B cell (primary cell): ENCODE measurements at regions of chr1 and their contacts with region 1.

Region 1: DNA sequence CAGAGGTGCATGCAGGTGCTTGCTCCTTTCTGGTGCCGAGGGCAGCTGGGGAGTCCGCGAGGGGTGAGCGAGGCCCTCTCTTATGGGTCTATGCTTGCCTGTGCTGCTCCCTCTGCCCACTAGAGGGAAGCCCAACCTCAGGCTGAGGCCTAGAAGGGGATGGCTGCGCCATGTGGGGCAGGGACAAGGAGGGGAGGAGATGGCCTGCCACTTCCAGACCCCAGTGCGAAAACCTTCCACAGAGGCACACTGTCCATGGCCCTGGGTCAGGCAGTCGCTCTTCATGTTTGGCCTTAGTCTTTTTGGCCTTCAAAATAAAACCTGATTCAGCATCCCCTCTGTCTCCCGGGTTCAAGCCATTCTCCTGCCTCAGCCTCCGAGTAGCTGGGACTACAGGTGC is 14.0 kb downstream of the RHBG start:
- DNase-seq: peak; percentile 70
- ATAC-seq: peak; percentile 87
- H3K4me3 ChIP-seq: no peak overlapping the region
- H3K4me3 Mint-ChIP-seq: no peak overlapping the region
- H3K27ac ChIP-seq: no peak overlapping the region
- H3K27ac Mint-ChIP-seq: no peak overlapping the region
- H3K4me1 ChIP-seq: peaks cover 0 to 11% of the 10 kb centered on the region in 2 donors
- H3K4me1 Mint-ChIP-seq: peaks cover 4% of the 10 kb centered on the region
- H3K27me3 ChIP-seq: peaks cover 0 to 22% (median 9%) of the 10 kb centered on the region in 4 experiments
- H3K27me3 Mint-ChIP-seq: peaks cover 14% of the 10 kb centered on the region
- CTCF ChIP-seq: peak; percentile 78

Region 2: GRCh38 chr1:156212833-156213643 is 170.0 kb before region 1 on chr1 and contains the start of gene PMF1:
- CTCF ChIA-PET with region 1: no interaction called
- POLR2A ChIA-PET with region 1: no interaction called
- intact Hi-C with region 1: no loop called
- DNase-seq: peak; percentile 97
- ATAC-seq: peak; percentile 97
- H3K4me3 ChIP-seq: peak within 1 kb of the TSS; percentile 75 to 95 (median 81)
- H3K4me3 Mint-ChIP-seq: peak within 1 kb of the TSS; percentile 98
- H3K27ac ChIP-seq: peak within 1 kb of the TSS; percentile 93 to 94
- H3K27ac Mint-ChIP-seq: peak within 1 kb of the TSS; percentile 99
- H3K4me1 ChIP-seq: peaks cover 14 to 19% of the 10 kb centered on the region in 2 donors
- H3K4me1 Mint-ChIP-seq: peaks cover 29% of the 10 kb centered on the region
- H3K27me3 ChIP-seq: no peaks in the 10 kb centered on the region
- H3K27me3 Mint-ChIP-seq: no peaks in the 10 kb centered on the region
- CTCF ChIP-seq: no peak
- total RNA-seq, gene PMF1: 58.3 and 64.3 TPM in 2 replicates

Region 3: DNA sequence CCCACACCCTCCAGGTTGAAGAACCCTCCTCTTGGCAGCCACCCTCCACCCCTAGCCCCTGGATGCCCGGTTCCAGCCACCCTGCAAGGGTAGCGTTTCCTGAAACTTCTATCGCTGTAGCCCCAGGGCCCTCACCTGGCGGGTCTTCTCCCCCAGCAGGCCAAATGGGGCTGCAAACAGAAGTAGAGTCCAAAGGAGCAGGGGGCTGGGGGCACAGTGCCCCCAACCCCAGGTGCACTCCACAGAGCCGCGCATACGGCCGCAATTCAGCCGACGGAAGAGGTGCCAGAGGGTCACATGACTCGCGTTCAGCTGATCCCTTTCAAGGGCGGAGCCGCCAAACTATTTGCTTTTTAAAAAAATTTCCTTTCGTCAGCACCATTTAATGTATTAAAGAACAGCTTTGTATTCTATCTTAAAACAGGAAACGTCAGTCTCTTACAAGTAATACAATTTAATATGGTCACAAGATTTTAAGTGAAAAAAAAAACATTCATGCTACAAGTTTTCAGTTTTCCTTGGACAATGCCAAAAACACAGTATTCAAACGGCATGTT is 87.6 kb before region 1 on chr1 and contains the start of gene GLMP:
- CTCF ChIA-PET with region 1: no interaction called
- POLR2A ChIA-PET with region 1: no interaction called
- intact Hi-C with region 1: no loop called
- DNase-seq: peak; percentile 70
- ATAC-seq: peak; percentile 60
- H3K4me3 ChIP-seq: peak within 1 kb of the TSS; percentile 54 to 78 (median 70)
- H3K4me3 Mint-ChIP-seq: peak within 1 kb of the TSS; percentile 92
- H3K27ac ChIP-seq: peak within 1 kb of the TSS in 1 of 2 donors; percentile 58
- H3K27ac Mint-ChIP-seq: peak within 1 kb of the TSS; percentile 80
- H3K4me1 ChIP-seq: peaks cover 12 to 20% of the 10 kb centered on the region in 2 donors
- H3K4me1 Mint-ChIP-seq: peaks cover 20% of the 10 kb centered on the region
- H3K27me3 ChIP-seq: peaks cover 0 to 2% (median 0%) of the 10 kb centered on the region in 4 experiments
- H3K27me3 Mint-ChIP-seq: no peaks in the 10 kb centered on the region
- CTCF ChIP-seq: no peak
- total RNA-seq, gene GLMP: 21.2 and 21.3 TPM in 2 replicates

Region 4: DNA sequence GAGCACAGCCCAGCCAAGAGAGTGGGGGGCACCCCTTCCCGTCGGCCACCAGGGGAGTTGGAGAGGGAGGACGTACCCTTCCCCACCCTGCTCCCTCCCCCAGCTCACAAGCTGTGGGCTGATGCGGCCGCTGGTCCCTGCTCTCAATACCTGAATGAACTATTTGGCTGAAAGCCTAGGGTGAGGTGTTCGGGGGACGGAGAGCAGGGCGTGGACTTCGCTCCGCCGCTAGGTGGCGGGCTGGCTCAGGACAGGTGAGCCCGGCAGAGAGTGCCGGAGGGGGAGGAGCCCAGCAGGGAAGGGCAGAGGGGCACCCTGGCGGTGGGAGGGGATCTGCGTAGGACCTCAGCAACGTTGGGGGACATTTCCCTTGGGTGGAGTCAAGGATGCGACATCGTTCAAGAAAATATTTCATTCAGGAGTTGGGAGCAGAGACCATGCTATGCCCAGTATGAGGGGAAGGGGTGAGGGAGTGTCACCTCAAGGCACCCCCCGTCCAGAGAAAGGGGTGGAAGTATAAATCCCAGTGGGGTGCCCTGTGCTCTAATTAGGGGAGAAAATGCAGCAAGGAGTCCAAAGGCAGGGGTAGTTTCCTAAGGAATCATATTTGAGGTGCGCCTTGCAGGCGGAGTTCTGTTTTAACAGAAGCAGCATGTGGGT is 26.0 kb before region 1 on chr1:
- CTCF ChIA-PET with region 1: interaction called, 12 read pairs
- POLR2A ChIA-PET with region 1: interaction called, 3 read pairs
- intact Hi-C with region 1: no loop called
- DNase-seq: peak; percentile 72
- ATAC-seq: peak; percentile 100
- H3K4me3 ChIP-seq: no peak overlapping the region
- H3K4me3 Mint-ChIP-seq: peak overlapping the region; percentile 33
- H3K27ac ChIP-seq: no peak overlapping the region
- H3K27ac Mint-ChIP-seq: no peak overlapping the region
- H3K4me1 ChIP-seq: peaks cover 6 to 9% of the 10 kb centered on the region in 2 donors
- H3K4me1 Mint-ChIP-seq: peaks cover 6% of the 10 kb centered on the region
- H3K27me3 ChIP-seq: peaks cover 0 to 25% (median 11%) of the 10 kb centered on the region in 4 experiments
- H3K27me3 Mint-ChIP-seq: peaks cover 35% of the 10 kb centered on the region
- CTCF ChIP-seq: peak; percentile 99

Region 5: DNA sequence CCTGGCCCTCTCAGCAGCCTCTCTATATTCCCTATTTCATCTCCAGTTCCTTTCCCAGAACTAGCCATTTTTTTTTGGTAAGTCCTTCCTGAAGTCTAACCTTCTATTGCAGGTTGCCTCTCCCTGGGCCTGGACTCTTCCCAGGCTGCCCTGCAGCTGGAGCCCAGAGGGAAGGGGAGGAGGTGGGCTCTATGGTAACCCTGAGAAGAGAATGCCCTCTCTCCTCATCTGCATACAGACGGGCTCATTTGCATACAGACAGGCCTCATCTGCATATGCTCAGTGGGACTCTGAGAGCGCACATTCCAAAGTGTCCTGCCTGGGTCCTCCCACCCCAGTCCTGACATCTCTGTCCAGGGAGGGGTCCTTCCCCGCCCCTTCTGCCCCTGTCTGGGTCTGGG is 18.7 kb after region 1 on chr1:
- CTCF ChIA-PET with region 1: interaction called, 21 read pairs
- POLR2A ChIA-PET with region 1: no interaction called
- intact Hi-C with region 1: no loop called
- DNase-seq: no peak
- ATAC-seq: no peak
- H3K4me3 ChIP-seq: no peak overlapping the region
- H3K4me3 Mint-ChIP-seq: no peak overlapping the region
- H3K27ac ChIP-seq: no peak overlapping the region
- H3K27ac Mint-ChIP-seq: no peak overlapping the region
- H3K4me1 ChIP-seq: peaks cover 0 to 5% of the 10 kb centered on the region in 2 donors
- H3K4me1 Mint-ChIP-seq: peaks cover 8% of the 10 kb centered on the region
- H3K27me3 ChIP-seq: peaks cover 0 to 29% (median 1%) of the 10 kb centered on the region in 4 experiments
- H3K27me3 Mint-ChIP-seq: peaks cover 18% of the 10 kb centered on the region
- CTCF ChIP-seq: no peak

Region 6: DNA sequence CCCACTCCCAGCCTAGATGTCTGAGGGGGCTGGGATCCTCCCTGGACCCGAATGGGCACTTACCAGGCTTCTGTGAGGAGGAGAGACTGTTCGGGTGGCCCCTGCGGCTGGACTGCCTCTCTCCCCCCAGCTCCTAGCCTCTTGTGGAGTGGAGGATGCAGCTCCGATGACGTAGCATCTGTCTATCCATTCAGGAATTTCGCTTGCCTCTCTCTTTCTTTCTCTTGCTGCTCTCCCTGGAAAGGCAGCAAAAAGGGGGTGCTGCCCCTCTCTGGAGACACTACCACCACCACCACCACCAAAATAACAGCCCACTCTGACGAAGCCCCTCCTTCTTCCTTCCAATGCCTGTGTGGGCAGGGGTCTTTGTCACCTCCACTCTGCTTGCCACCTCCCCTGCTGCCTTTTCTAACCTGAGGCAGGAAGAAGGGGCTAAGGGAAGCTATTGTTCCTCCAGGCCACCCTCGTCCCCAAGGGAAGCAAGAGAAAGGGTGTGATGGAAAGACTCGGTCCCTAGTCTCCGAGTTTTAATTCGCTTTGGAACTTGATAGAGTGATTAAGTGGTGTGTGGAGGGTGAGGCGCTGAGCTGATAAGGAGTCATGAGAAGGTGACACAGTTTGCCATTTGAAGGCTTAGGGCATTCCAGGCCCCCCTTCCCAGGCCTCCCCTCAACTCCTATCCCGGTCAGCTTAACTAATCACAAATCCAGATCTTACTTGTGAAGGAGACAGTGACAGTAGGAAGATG is 46.5 kb after region 1 on chr1:
- CTCF ChIA-PET with region 1: interaction called, 44 read pairs
- POLR2A ChIA-PET with region 1: no interaction called
- intact Hi-C with region 1: no loop called
- DNase-seq: no peak
- ATAC-seq: no peak
- H3K4me3 ChIP-seq: no peak overlapping the region
- H3K4me3 Mint-ChIP-seq: no peak overlapping the region
- H3K27ac ChIP-seq: no peak overlapping the region
- H3K27ac Mint-ChIP-seq: no peak overlapping the region
- H3K4me1 ChIP-seq: no peaks in the 10 kb centered on the region
- H3K4me1 Mint-ChIP-seq: no peaks in the 10 kb centered on the region
- H3K27me3 ChIP-seq: peaks cover 0 to 90% (median 53%) of the 10 kb centered on the region in 4 experiments
- H3K27me3 Mint-ChIP-seq: peaks cover 82% of the 10 kb centered on the region
- CTCF ChIP-seq: no peak

Region 7: GRCh38 chr1:156456622-156457465 is 73.8 kb after region 1 on chr1:
- CTCF ChIA-PET with region 1: interaction called, 445 read pairs
- POLR2A ChIA-PET with region 1: no interaction called
- intact Hi-C with region 1: no loop called
- DNase-seq: peak; percentile 98
- ATAC-seq: peak; percentile 85
- H3K4me3 ChIP-seq: peak overlapping the region; percentile 41 to 87 (median 84)
- H3K4me3 Mint-ChIP-seq: peak overlapping the region; percentile 96
- H3K27ac ChIP-seq: peak overlapping the region; percentile 97 to 100
- H3K27ac Mint-ChIP-seq: peak overlapping the region; percentile 98
- H3K4me1 ChIP-seq: peaks cover 3 to 15% of the 10 kb centered on the region in 2 donors
- H3K4me1 Mint-ChIP-seq: peaks cover 17% of the 10 kb centered on the region
- H3K27me3 ChIP-seq: no peaks in the 10 kb centered on the region
- H3K27me3 Mint-ChIP-seq: no peaks in the 10 kb centered on the region
- CTCF ChIP-seq: no peak

Region 8: GRCh38 chr1:156601122-156601830 is 218.3 kb after region 1 on chr1 and contains the start of gene GPATCH4:
- CTCF ChIA-PET with region 1: interaction called, 21 read pairs
- POLR2A ChIA-PET with region 1: no interaction called
- intact Hi-C with region 1: no loop called
- DNase-seq: peak; percentile 84
- ATAC-seq: peak; percentile 74
- H3K4me3 ChIP-seq: peak within 1 kb of the TSS; percentile 85 to 100 (median 99)
- H3K4me3 Mint-ChIP-seq: peak within 1 kb of the TSS; percentile 97
- H3K27ac ChIP-seq: peak within 1 kb of the TSS; percentile 72 to 83
- H3K27ac Mint-ChIP-seq: peak within 1 kb of the TSS; percentile 96
- H3K4me1 ChIP-seq: peaks cover 22 to 30% of the 10 kb centered on the region in 2 donors
- H3K4me1 Mint-ChIP-seq: peaks cover 38% of the 10 kb centered on the region
- H3K27me3 ChIP-seq: no peaks in the 10 kb centered on the region
- H3K27me3 Mint-ChIP-seq: no peaks in the 10 kb centered on the region
- CTCF ChIP-seq: no peak
- total RNA-seq, gene GPATCH4: 31.4 and 38.3 TPM in 2 replicates